PC-9 (cell line): ENCODE measurements at regions of chr1 and their contacts with region 1.

Region 1: GRCh38 chr1:17215545-17215890 is 10.6 kb downstream of the PADI1 start:
- DNase-seq: peak; percentile 64 to 72
- H3K4me3 ChIP-seq: peak overlapping the region; percentile 32; the same call in 1 of the 2 replicates
- H3K27ac ChIP-seq: peak overlapping the region; percentile 95
- H3K4me1 ChIP-seq: peaks cover 63% of the 10 kb centered on the region
- H3K27me3 ChIP-seq: no peaks in the 10 kb centered on the region
- CTCF ChIP-seq: no peak

Region 2: DNA sequence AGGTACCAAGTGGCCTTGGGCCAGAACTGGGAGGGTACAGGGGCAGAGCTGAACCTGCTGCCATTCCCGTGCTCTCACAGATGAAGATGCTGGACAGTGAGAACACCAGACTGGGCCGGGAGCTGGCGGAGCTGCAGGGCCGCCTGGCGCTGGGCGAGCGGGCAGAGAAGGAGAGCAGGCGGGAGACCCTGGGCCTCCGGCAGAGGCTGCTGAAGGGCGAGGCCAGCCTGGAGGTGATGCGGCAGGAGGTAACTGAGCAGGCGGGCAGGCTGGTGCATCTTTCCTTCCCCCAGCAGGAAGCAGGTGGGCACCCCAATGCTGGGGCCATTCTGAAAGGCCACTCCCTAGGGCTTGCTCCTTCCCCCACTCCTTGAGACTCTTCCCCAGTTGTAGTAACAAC is 257.0 kb before region 1 on chr1:
- CTCF ChIA-PET with region 1: no interaction called
- POLR2A ChIA-PET with region 1: no interaction called
- intact Hi-C with region 1: no loop called
- DNase-seq: no peak
- H3K4me3 ChIP-seq: no peak overlapping the region
- H3K27ac ChIP-seq: no peak overlapping the region
- H3K4me1 ChIP-seq: no peaks in the 10 kb centered on the region
- H3K27me3 ChIP-seq: no peaks in the 10 kb centered on the region
- CTCF ChIP-seq: no peak

Region 3: GRCh38 chr1:17135530-17135929 is 80.0 kb before region 1 on chr1:
- CTCF ChIA-PET with region 1: no interaction called
- POLR2A ChIA-PET with region 1: no interaction called
- intact Hi-C with region 1: no loop called
- DNase-seq: no peak
- H3K4me3 ChIP-seq: no peak overlapping the region
- H3K27ac ChIP-seq: no peak overlapping the region
- H3K4me1 ChIP-seq: no peaks in the 10 kb centered on the region; the same call in 1 of the 2 replicates
- H3K27me3 ChIP-seq: no peaks in the 10 kb centered on the region
- CTCF ChIP-seq: no peak

Region 4: DNA sequence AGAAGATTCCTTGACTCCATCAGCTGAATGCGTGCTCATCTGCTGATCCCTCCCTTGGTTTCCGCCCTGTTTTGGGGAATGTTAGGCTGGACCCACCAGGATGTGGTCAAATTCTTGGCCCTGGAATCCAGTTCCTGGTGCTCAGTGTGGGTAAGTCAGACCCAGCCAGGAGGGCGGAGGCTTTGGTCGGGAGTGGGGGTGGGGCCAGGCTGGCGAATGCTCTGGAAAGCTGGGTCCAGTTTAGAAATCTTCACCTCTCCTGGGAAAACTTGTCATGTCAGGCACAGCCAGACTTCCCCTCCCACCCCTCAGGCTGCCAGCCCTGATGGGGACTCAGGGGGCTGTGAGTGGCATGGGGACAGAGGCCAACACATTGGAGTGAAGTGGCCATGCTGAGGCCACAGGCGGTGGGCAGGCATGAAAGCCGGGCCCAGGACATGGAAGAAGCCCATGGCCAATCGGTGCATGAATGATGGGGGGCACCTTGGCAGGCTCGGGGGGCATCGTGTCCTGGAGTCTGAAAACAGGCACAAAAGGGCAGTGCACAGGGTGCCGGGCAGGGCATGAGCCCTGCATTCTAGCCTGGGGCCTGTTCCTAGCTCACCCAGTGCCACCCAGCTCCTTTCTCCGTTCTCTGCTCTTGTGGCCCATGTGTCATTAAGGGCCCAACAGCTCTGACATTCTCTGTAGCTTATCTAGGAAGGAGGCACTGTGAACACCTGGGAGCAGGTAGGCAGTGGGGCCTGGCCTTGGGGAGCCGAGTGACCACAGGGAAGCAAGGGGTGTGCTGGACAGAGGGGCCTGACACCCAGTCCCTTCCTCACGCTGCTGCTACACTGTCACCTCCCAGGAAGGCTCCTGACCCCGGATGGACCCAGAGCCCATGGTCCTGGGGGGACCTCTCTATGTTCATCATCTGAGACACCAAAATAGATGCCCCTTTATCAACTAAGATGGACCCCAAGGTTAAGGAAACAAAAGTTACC is 25.2 kb before region 1 on chr1:
- CTCF ChIA-PET with region 1: no interaction called
- POLR2A ChIA-PET with region 1: interaction called, 3 read pairs
- intact Hi-C with region 1: loop called (anchors 1 kb)
- DNase-seq: peak; percentile 90 to 93
- H3K4me3 ChIP-seq: peak overlapping the region; percentile 30
- H3K27ac ChIP-seq: peak overlapping the region; percentile 86
- H3K4me1 ChIP-seq: peaks cover 26% of the 10 kb centered on the region
- H3K27me3 ChIP-seq: no peaks in the 10 kb centered on the region
- CTCF ChIP-seq: no peak

Region 5: GRCh38 chr1:17201201-17202021 is 14.1 kb before region 1 on chr1:
- CTCF ChIA-PET with region 1: interaction called, 4 read pairs
- POLR2A ChIA-PET with region 1: interaction called, 14 read pairs
- intact Hi-C with region 1: loop called (anchors 1 kb)
- DNase-seq: peak; percentile 77 to 90
- H3K4me3 ChIP-seq: peak overlapping the region; percentile 15; the same call in 1 of the 2 replicates
- H3K27ac ChIP-seq: peak overlapping the region; percentile 90
- H3K4me1 ChIP-seq: peaks cover 57% of the 10 kb centered on the region
- H3K27me3 ChIP-seq: no peaks in the 10 kb centered on the region
- CTCF ChIP-seq: no peak

Region 6: GRCh38 chr1:17229383-17229782 is 13.9 kb after region 1 on chr1:
- CTCF ChIA-PET with region 1: interaction called, 3 read pairs
- POLR2A ChIA-PET with region 1: interaction called, 17 read pairs
- intact Hi-C with region 1: loop called (anchors 1 kb)
- DNase-seq: peak; percentile 75 to 87
- H3K4me3 ChIP-seq: no peak overlapping the region; the same call in 1 of the 2 replicates
- H3K27ac ChIP-seq: peak overlapping the region; percentile 100
- H3K4me1 ChIP-seq: peaks cover 89% of the 10 kb centered on the region
- H3K27me3 ChIP-seq: no peaks in the 10 kb centered on the region
- CTCF ChIP-seq: no peak